Activated B cell treated with CpG ODN at 0.5 μM for 24 hours (primary cell): ENCODE measurements at regions of chr13 and their contacts with region 1.

Region 1: DNA sequence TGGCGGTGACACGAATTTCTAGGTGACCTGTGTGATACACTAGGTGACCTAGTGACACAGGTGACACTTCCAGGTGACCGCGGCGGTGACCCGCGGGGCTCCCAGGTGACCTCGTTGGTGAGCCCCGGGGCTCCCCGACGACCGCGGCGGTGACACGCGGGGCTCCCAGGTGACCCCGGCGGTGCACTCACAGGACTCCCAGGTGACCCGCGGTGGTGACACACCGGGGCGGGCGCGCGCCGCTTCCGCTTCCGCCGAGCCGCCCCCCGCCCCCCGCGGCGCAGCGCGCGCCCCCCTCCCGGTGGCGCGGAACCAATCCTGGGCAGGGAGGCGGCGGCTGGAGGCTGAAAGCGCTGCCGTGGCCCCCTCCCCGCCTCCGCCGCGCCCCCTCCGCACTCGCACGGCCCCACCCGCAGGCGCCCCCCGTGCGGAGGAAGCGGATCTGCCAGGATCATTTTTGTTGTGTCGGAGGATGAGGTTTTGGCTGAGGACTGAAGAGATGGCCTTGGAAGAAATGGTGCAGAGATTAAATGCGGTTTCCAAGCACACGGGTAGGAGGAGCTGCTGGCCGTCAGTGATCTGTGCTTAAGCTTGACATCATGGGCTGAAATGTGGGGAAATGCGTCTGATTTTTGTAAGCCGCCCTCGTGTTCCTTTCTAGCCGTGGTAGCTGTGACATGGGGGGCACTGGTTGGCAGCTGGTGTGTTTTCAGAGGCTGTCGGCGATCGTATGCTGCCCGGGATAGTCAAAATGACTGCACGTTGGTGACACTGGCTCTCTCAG is at the start of gene MCF2L:
- DNase-seq: peak; percentile 52
- ATAC-seq: peak; percentile 63
- H3K4me3 Mint-ChIP-seq: peak within 1 kb of the TSS; percentile 88
- H3K27ac Mint-ChIP-seq: peak within 1 kb of the TSS; percentile 47
- H3K4me1 Mint-ChIP-seq: peaks cover 11% of the 10 kb centered on the region
- H3K27me3 Mint-ChIP-seq: peaks cover 26% of the 10 kb centered on the region
- CTCF ChIP-seq: no peak
- total RNA-seq, gene MCF2L: 2.1 and 3.4 TPM in 2 replicates

Region 2: GRCh38 chr13:112634102-112634501 is 335.0 kb before region 1 on chr13:
- CTCF ChIA-PET with region 1: no interaction called
- POLR2A ChIA-PET with region 1: no interaction called
- intact Hi-C with region 1: no loop called
- DNase-seq: no peak
- ATAC-seq: no peak
- H3K4me3 Mint-ChIP-seq: no peak overlapping the region
- H3K27ac Mint-ChIP-seq: no peak overlapping the region
- H3K4me1 Mint-ChIP-seq: no peaks in the 10 kb centered on the region
- H3K27me3 Mint-ChIP-seq: peaks cover 22% of the 10 kb centered on the region
- CTCF ChIP-seq: no peak

Region 3: GRCh38 chr13:113029487-113030258 is 60.6 kb after region 1 on chr13:
- CTCF ChIA-PET with region 1: interaction called, 4 read pairs
- POLR2A ChIA-PET with region 1: no interaction called
- intact Hi-C with region 1: loop called (anchors 2 kb)
- DNase-seq: peak; percentile 49
- ATAC-seq: no peak
- H3K4me3 Mint-ChIP-seq: no peak overlapping the region
- H3K27ac Mint-ChIP-seq: no peak overlapping the region
- H3K4me1 Mint-ChIP-seq: no peaks in the 10 kb centered on the region
- H3K27me3 Mint-ChIP-seq: no peaks in the 10 kb centered on the region
- CTCF ChIP-seq: no peak